WTC11 (cell line): ENCODE measurements at regions of chr7 and their contacts with region 1.

Region 1: GRCh38 chr7:20217193-20217948 is at the start of gene MACC1:
- DNase-seq: peak; percentile 83
- ATAC-seq: peak; percentile 98
- H3K4me3 Mint-ChIP-seq: peak within 1 kb of the TSS; percentile 71
- H3K27ac Mint-ChIP-seq: peak within 1 kb of the TSS; percentile 99
- H3K4me1 Mint-ChIP-seq: peaks cover 46% of the 10 kb centered on the region
- H3K27me3 Mint-ChIP-seq: no peaks in the 10 kb centered on the region
- CTCF ChIP-seq: no peak
- total RNA-seq, gene MACC1: 14.6 to 23.0 TPM (median 22.4 TPM) in 3 replicates

Region 2: DNA sequence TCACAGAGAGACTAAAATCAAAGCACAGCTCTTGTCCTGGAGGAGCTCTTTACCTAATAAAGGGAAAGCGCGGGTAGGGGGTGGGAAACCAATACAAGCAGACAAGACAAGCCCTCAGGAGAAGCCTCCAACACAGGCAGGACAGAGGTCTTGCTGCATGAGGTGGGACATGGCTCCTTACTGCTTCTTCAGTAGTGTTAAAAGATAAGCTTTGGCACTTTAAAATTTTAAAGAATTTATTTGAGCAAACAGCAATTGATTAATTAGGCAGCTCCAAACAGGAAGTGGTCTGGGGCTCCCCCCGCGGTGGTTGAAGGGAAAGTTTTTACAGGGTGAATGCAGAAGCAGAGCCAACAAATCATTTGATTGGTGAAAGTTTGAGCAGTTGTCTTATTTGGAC is 50.1 kb after region 1 on chr7:
- CTCF ChIA-PET with region 1: interaction called, 12 read pairs
- POLR2A ChIA-PET with region 1: no interaction called
- DNase-seq: peak; percentile 26
- ATAC-seq: peak; percentile 88
- H3K4me3 Mint-ChIP-seq: no peak overlapping the region
- H3K27ac Mint-ChIP-seq: peak overlapping the region; percentile 91; the same call in 1 of the 2 replicates
- H3K4me1 Mint-ChIP-seq: peaks cover 25% of the 10 kb centered on the region
- H3K27me3 Mint-ChIP-seq: no peaks in the 10 kb centered on the region
- CTCF ChIP-seq: no peak

Region 3: GRCh38 chr7:20330240-20330927 is 113.0 kb after region 1 on chr7 and contains the start of gene ITGB8:
- CTCF ChIA-PET with region 1: no interaction called
- POLR2A ChIA-PET with region 1: interaction called, 10 read pairs
- DNase-seq: peak; percentile 64
- ATAC-seq: peak; percentile 73
- H3K4me3 Mint-ChIP-seq: peak within 1 kb of the TSS; percentile 93
- H3K27ac Mint-ChIP-seq: peak within 1 kb of the TSS; percentile 92
- H3K4me1 Mint-ChIP-seq: peaks cover 15% of the 10 kb centered on the region
- H3K27me3 Mint-ChIP-seq: peaks cover 20% of the 10 kb centered on the region
- CTCF ChIP-seq: no peak
- total RNA-seq, gene ITGB8: 1.8 to 2.2 TPM (median 1.9 TPM) in 3 replicates